PC-9 (cell line): ENCODE measurements at regions of chr15 and their contacts with region 1.

Region 1: DNA sequence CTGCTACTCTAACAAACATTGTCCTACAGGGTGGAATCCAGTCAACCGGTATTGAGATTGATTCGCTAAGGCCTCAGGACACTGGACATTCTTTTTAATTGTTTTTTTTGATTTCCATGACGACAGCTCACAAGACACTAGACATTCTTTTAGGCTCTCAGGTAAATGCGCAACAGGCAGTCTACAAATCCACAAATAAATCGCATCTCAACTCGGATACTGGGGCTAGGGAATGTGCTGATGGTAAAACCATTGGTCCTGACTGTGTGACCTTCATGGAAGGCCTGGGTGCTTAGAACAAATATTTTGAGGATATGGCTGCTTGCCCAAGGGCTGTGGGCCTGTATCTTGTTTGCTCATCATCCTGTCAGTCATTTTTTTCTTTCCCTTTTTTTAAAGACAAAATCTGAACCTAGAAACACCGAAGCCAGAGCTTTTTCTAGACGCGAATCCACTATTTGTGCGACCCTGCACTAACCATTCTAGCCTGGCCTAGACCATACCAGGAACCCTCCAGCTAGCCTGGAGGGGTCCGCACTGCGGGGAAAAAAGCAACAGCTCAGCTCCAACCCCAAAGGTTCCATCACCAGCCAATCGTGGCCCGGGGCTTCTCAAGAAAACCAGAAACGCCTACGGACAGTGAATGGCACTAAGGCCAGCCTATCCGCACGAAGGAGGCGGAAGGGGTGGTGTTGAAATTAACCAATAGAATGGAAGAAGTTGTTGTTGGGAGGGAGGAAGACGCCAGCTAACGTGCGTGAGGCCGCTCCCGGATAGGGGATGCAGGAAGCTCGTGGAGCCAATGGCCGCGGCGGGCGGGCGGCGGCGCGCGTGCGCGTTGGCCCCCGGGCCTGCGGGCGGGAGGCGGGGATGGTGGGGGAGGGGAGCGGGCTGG is 18.1 kb upstream of the CHD2 start:
- DNase-seq: peak; percentile 97 to 98
- H3K4me3 ChIP-seq: peak overlapping the region; percentile 58
- H3K27ac ChIP-seq: peak overlapping the region; percentile 74
- H3K4me1 ChIP-seq: peaks cover 42% of the 10 kb centered on the region
- H3K27me3 ChIP-seq: no peaks in the 10 kb centered on the region
- CTCF ChIP-seq: no peak

Region 2: GRCh38 chr15:92808978-92809879 is 72.8 kb before region 1 on chr15:
- CTCF ChIA-PET with region 1: interaction called, 4 read pairs
- POLR2A ChIA-PET with region 1: interaction called, 38 read pairs
- intact Hi-C with region 1: loop called (anchors 1 kb)
- DNase-seq: peak; percentile 83 to 98
- H3K4me3 ChIP-seq: peak overlapping the region; percentile 84
- H3K27ac ChIP-seq: peak overlapping the region; percentile 99
- H3K4me1 ChIP-seq: peaks cover 66% of the 10 kb centered on the region
- H3K27me3 ChIP-seq: no peaks in the 10 kb centered on the region
- CTCF ChIP-seq: peak; percentile 81

Region 3: DNA sequence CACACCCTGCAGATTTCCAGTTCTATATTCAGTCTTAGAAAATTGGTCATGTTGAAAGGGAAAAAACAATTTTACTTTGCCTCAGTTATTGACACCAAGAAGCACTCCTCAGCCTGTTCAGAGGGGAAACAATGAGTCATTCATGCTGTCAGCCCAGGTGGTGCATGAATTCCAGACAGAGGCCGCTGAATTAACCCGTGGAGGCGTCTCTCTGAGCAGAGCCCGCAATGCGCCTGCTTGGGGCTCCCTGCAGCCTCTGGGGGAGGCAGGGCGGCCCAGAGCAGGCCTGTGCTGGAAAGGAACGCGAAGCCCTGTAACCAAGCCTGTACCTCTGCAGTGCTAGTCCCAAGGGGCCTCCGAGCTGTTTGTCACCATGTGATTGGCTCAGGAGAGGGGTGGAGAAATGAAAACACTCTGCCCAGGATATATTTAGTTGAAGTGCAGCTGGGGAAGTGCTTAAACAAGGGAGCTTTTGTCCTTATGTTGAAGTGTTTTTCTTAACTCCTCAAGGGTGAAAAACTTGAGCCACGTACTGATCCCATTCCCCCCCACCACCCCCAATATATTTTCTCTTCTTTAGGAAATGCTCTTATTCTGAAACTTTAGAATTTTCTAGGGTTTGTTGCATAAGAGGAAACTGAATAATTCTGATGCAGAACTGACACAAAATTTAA is 50.3 kb before region 1 on chr15:
- CTCF ChIA-PET with region 1: interaction called, 6 read pairs
- POLR2A ChIA-PET with region 1: interaction called, 32 read pairs
- intact Hi-C with region 1: no loop called
- DNase-seq: peak; percentile 93 to 94
- H3K4me3 ChIP-seq: peak overlapping the region; percentile 35
- H3K27ac ChIP-seq: peak overlapping the region; percentile 76
- H3K4me1 ChIP-seq: peaks cover 35% of the 10 kb centered on the region
- H3K27me3 ChIP-seq: no peaks in the 10 kb centered on the region
- CTCF ChIP-seq: no peak

Region 4: GRCh38 chr15:92845126-92845508 is 36.9 kb before region 1 on chr15:
- CTCF ChIA-PET with region 1: no interaction called
- POLR2A ChIA-PET with region 1: interaction called, 3 read pairs
- intact Hi-C with region 1: loop called (anchors 1 kb)
- DNase-seq: peak in 1 of 2 experiments; percentile 86
- H3K4me3 ChIP-seq: no peak overlapping the region; the same call in 1 of the 2 replicates
- H3K27ac ChIP-seq: peak overlapping the region; percentile 89
- H3K4me1 ChIP-seq: peaks cover 42% of the 10 kb centered on the region
- H3K27me3 ChIP-seq: no peaks in the 10 kb centered on the region
- CTCF ChIP-seq: no peak

Region 5: DNA sequence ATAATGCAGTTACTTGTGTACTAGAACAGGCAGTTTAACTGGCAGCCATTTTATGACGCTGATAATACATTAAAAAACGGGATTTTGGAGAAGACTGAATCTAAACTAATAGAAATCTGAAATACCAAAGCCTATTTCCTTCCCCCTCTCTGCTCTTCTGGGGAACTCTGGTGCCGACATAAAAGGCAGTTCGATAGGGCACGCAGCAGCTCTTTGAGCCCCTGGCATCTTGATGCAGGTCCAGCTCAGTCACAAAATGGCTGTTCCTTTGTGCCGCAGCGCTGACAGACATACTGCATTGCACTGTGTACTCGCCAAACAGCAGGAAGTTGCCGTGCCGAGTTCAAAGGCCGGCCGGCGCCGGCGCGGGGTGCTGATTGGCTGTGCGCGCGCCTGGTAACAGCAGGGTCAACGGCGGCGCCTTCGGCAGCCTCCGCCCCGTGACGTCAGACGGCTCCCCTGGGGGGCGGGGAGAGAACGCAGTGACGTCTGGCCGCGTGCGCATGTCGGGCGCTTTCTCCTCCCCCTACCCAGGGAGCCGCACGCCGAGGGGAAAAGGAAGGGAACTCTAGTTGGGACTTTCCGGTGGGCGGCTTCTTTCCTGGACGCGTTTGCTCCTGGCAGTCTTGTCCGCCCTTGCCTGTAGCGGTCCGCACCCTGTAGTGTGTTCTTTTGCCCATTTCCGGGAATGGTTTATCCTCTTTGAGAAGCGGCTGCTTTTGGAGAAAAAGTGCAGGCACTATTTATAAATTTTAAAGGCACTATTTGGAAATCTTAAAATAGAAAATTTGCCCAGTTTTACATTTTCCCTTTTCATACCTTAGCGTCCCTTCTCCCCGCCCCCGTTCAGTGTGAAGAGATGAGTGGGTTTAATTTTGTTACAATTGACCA is 22.1 kb after region 1 on chr15:
- CTCF ChIA-PET with region 1: no interaction called
- POLR2A ChIA-PET with region 1: interaction called, 25 read pairs
- intact Hi-C with region 1: loop called (anchors 1 kb)
- DNase-seq: peak; percentile 93 to 99
- H3K4me3 ChIP-seq: peak overlapping the region; percentile 94
- H3K27ac ChIP-seq: peak overlapping the region; percentile 98
- H3K4me1 ChIP-seq: peaks cover 45% of the 10 kb centered on the region
- H3K27me3 ChIP-seq: no peaks in the 10 kb centered on the region
- CTCF ChIP-seq: no peak